Caco-2 (cell line): ENCODE measurements at regions of chr6 and their contacts with region 1.

Region 1: DNA sequence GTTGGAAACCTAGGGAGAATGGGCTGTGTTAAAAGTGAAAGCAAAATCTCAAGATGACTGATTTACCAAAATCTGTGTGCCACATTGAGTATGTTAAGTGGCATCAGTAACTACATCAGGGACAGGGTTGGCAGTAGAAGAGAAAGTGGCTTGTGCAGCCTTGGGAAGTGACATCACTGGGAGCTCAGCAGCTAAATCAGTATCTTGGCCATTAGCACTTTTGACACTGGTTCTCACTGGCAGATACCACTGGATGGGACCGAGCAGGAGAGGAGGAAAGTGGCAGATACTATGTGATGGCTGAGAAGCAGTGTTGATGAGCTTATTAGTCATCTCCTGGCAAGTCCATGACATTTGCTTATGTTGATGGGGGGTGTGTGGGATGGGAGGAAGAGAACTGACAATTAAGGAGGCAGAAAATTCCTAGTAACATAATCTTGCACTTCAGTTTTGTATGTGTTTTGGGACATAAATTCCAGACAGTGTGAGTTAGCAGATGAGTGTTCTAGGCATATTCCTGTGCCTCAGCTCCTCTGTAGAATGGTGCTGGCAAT is 322.2 kb downstream of the SOX4 start:
- DNase-seq: no peak
- H3K4me3 ChIP-seq: no peak overlapping the region
- H3K4me3 Mint-ChIP-seq: no peak overlapping the region
- H3K27ac Mint-ChIP-seq: no peak overlapping the region
- H3K4me1 ChIP-seq: peaks cover 10% of the 10 kb centered on the region
- H3K4me1 Mint-ChIP-seq: peaks cover 13% of the 10 kb centered on the region
- H3K27me3 ChIP-seq: no peaks in the 10 kb centered on the region
- H3K27me3 Mint-ChIP-seq: no peaks in the 10 kb centered on the region
- CTCF ChIP-seq: no peak

Region 2: GRCh38 chr6:21826023-21826422 is 89.8 kb before region 1 on chr6:
- CTCF ChIA-PET with region 1: no interaction called
- POLR2A ChIA-PET with region 1: no interaction called
- intact Hi-C with region 1: loop called (anchors 5 kb)
- DNase-seq: peak; percentile 59 to 65
- H3K4me3 ChIP-seq: no peak overlapping the region
- H3K4me3 Mint-ChIP-seq: peak overlapping the region; percentile 72
- H3K27ac Mint-ChIP-seq: peak overlapping the region; percentile 76
- H3K4me1 ChIP-seq: peaks cover 54% of the 10 kb centered on the region
- H3K4me1 Mint-ChIP-seq: peaks cover 40% of the 10 kb centered on the region
- H3K27me3 ChIP-seq: no peaks in the 10 kb centered on the region
- H3K27me3 Mint-ChIP-seq: no peaks in the 10 kb centered on the region
- CTCF ChIP-seq: no peak

Region 3: GRCh38 chr6:21953831-21954801 is 38.3 kb after region 1 on chr6:
- CTCF ChIA-PET with region 1: no interaction called
- POLR2A ChIA-PET with region 1: no interaction called
- intact Hi-C with region 1: loop called (anchors 1 kb)
- DNase-seq: no peak
- H3K4me3 ChIP-seq: no peak overlapping the region
- H3K4me3 Mint-ChIP-seq: no peak overlapping the region
- H3K27ac Mint-ChIP-seq: peak overlapping the region; percentile 65
- H3K4me1 ChIP-seq: peaks cover 32% of the 10 kb centered on the region
- H3K4me1 Mint-ChIP-seq: peaks cover 43% of the 10 kb centered on the region
- H3K27me3 ChIP-seq: no peaks in the 10 kb centered on the region
- H3K27me3 Mint-ChIP-seq: no peaks in the 10 kb centered on the region
- CTCF ChIP-seq: no peak